ENCODE measurements at regions of chr10 and their contacts with region 1.

Region 1: DNA sequence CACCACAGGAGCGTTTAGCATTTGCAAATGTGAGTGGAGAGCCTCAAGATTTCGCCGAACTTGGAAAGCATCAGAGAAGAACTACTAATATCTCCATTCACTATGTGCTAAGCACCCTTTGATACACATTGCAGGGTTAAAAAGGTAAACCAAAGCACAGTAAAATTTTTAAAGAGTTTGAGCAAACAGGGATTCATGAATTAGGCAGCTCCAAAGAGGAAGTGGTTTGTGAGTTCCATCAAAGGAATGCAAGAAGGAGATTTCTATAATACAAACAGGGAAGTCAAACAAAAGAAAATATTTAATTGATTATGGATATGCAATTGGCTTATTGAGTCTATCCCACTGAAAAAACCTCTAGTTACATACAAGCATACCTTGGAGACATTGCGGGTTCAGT is 81.1 kb upstream of the TMEM72 start:
- DNase-seq: no peak
- ATAC-seq: no peak
- H3K4me3 ChIP-seq: no peak overlapping the region
- H3K27ac ChIP-seq: no peak overlapping the region
- H3K4me1 ChIP-seq: peaks cover 0 to 16% (median 0%) of the 10 kb centered on the region in 9 donors
- H3K27me3 ChIP-seq: no peaks in the 10 kb centered on the region
- CTCF ChIP-seq: no peak

Region 2: GRCh38 chr10:44673245-44673983 is 156.6 kb before region 1 on chr10:
- intact Hi-C with region 1: loop called in 1 of 10 experiments (anchors 10 kb)
- DNase-seq: no peak
- ATAC-seq: no peak
- H3K4me3 ChIP-seq: no peak overlapping the region
- H3K27ac ChIP-seq: no peak overlapping the region
- H3K4me1 ChIP-seq: peaks cover 0 to 8% (median 0%) of the 10 kb centered on the region in 9 donors
- H3K27me3 ChIP-seq: no peaks in the 10 kb centered on the region
- CTCF ChIP-seq: no peak

Measured in heart right ventricle (tissue), 16 donors.